ENCODE measurements at regions of chr5 and their contacts with region 1.

Region 1: GRCh38 chr5:175718401-175719108 is 60.7 kb downstream of the HRH2 start:
- DNase-seq: peak; percentile 74
- H3K4me3 Mint-ChIP-seq: no peak overlapping the region
- H3K27ac Mint-ChIP-seq: no peak overlapping the region
- H3K4me1 Mint-ChIP-seq: peaks cover 6% of the 10 kb centered on the region
- H3K27me3 Mint-ChIP-seq: peaks cover 15% of the 10 kb centered on the region

Region 2: DNA sequence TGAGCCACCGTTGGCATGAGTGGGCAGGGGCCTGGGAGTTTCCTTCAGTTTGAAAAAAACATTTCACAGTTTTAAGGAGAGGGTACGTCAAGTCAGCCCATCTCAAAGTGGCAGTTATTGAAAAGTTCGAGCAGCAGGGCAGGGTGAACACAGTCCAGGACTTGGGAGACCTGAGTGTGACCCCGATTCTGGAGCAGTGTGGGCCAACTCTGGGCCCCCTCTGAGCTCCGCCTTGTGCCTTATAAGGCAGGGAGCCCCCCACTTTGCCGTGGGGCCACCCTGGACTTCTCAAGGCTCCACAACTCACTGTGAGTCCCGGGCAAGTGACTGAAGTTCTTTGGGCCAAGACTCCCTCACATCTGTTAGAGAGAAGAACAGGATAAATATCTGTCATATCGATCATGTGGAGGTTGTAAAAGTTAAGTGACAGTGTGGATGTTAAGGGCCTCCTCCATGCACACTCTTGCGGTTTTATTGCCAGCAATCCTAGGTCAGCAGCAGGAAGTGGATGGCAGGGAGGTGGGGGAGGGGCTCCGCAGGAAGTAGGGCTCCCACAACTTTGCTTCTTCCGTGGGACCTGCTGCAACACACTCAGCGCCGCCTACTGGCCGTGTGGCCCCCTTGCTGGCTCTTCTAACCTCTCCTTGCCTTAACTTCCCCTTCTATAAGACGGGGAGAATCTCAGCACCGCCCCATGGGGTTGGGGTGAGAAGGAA is 22.3 kb before region 1 on chr5:
- CTCF ChIA-PET with region 1: interaction called, 28 read pairs
- DNase-seq: peak; percentile 85
- H3K4me3 Mint-ChIP-seq: peak overlapping the region; percentile 32
- H3K27ac Mint-ChIP-seq: peak overlapping the region; percentile 86
- H3K4me1 Mint-ChIP-seq: peaks cover 30% of the 10 kb centered on the region
- H3K27me3 Mint-ChIP-seq: no peaks in the 10 kb centered on the region

Region 3: DNA sequence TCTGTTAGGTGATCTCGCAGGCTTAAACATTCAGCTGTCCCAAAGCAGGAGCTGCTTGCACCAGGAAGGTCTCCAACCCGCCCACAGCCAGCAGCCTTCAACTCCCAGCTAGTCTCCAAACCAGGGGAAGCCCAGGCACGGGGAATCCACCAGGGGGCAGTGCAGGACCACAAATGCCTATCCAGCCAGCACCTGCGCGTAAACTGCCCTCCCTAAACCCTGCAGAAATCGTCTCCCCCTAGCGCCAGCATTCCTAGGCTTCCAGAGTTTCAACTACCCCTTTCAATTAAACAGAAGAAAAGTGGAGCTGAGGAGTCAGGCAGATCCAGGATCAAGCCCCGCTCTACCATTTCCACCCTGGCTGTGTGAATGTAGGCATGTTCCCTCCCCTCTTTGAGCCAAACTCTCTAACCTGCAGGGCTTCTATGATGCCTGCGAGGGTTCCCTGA is 11.3 kb after region 1 on chr5:
- CTCF ChIA-PET with region 1: interaction called, 20 read pairs
- DNase-seq: peak; percentile 95
- H3K4me3 Mint-ChIP-seq: no peak overlapping the region
- H3K27ac Mint-ChIP-seq: no peak overlapping the region
- H3K4me1 Mint-ChIP-seq: peaks cover 9% of the 10 kb centered on the region
- H3K27me3 Mint-ChIP-seq: peaks cover 58% of the 10 kb centered on the region

Measured in activated naive CD4-positive, alpha-beta T cell treated with anti-CD3 and anti-CD28 coated beads, Interleukin-2, amount 10 ng/mL, durations not matched to agents 7 days and 5 days (primary cell).